Activated CD8-positive, alpha-beta T cell treated with anti-CD3 and anti-CD28 coated beads, Interleukin-2, amount 10 ng/mL, durations not matched to agents 7 days and 5 days (primary cell): ENCODE measurements at regions of chr7 and their contacts with region 1.

Region 1: GRCh38 chr7:149624419-149625339 is 127.1 kb upstream of the ZNF746 start:
- DNase-seq: peak; percentile 93
- ATAC-seq: peak; percentile 97
- H3K4me3 Mint-ChIP-seq: peak overlapping the region; percentile 88
- H3K27ac Mint-ChIP-seq: peak overlapping the region; percentile 90
- H3K4me1 Mint-ChIP-seq: peaks cover 43% of the 10 kb centered on the region
- H3K27me3 Mint-ChIP-seq: peaks cover 19% of the 10 kb centered on the region

Region 2: GRCh38 chr7:149460493-149461277 is 164.0 kb before region 1 on chr7 and contains the start of gene ZNF777:
- CTCF ChIA-PET with region 1: interaction called, 13 read pairs
- POLR2A ChIA-PET with region 1: interaction called, 6 read pairs
- DNase-seq: peak; percentile 89
- ATAC-seq: peak; percentile 98
- H3K4me3 Mint-ChIP-seq: peak within 1 kb of the TSS; percentile 82
- H3K27ac Mint-ChIP-seq: peak within 1 kb of the TSS; percentile 80
- H3K4me1 Mint-ChIP-seq: peaks cover 23% of the 10 kb centered on the region
- H3K27me3 Mint-ChIP-seq: peaks cover 18% of the 10 kb centered on the region
- total RNA-seq, gene ZNF777: 12.9 to 13.1 TPM

Region 3: GRCh38 chr7:149496642-149497391 is 127.9 kb before region 1 on chr7:
- CTCF ChIA-PET with region 1: interaction called, 25 read pairs
- POLR2A ChIA-PET with region 1: no interaction called
- DNase-seq: peak; percentile 66
- ATAC-seq: peak; percentile 35
- H3K4me3 Mint-ChIP-seq: peak overlapping the region; percentile 93
- H3K27ac Mint-ChIP-seq: peak overlapping the region; percentile 92
- H3K4me1 Mint-ChIP-seq: peaks cover 44% of the 10 kb centered on the region
- H3K27me3 Mint-ChIP-seq: peaks cover 2% of the 10 kb centered on the region

Region 4: GRCh38 chr7:149588930-149589329 is 35.7 kb before region 1 on chr7:
- CTCF ChIA-PET with region 1: no interaction called
- POLR2A ChIA-PET with region 1: no interaction called
- DNase-seq: no peak
- ATAC-seq: no peak
- H3K4me3 Mint-ChIP-seq: no peak overlapping the region
- H3K27ac Mint-ChIP-seq: peak overlapping the region; percentile 55
- H3K4me1 Mint-ChIP-seq: no peaks in the 10 kb centered on the region
- H3K27me3 Mint-ChIP-seq: no peaks in the 10 kb centered on the region

Region 5: DNA sequence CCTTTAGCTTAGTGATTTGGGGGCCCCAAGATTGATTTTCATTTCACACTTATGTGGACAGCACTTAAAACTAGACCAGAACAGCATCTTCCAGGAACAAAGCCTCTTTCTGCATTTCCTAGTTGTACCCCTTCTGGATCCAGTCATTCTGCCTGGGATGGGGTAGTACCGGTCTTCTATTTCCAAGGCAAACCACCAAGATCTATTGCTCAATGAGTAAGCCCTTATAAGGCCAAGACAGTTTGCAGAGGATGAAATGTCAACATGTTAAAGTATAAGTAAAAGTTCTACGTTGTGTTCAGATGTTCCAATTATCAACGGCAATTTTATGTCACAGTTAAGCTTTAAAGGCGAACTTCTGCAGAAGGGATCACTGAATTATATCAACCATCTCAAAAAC is 20.2 kb before region 1 on chr7:
- CTCF ChIA-PET with region 1: interaction called, 15 read pairs
- POLR2A ChIA-PET with region 1: interaction called, 3 read pairs
- DNase-seq: no peak
- ATAC-seq: no peak
- H3K4me3 Mint-ChIP-seq: no peak overlapping the region
- H3K27ac Mint-ChIP-seq: no peak overlapping the region
- H3K4me1 Mint-ChIP-seq: peaks cover 22% of the 10 kb centered on the region
- H3K27me3 Mint-ChIP-seq: no peaks in the 10 kb centered on the region

Region 6: GRCh38 chr7:149822353-149822943 is 197.8 kb after region 1 on chr7:
- CTCF ChIA-PET with region 1: no interaction called
- POLR2A ChIA-PET with region 1: no interaction called
- DNase-seq: no peak
- ATAC-seq: no peak
- H3K4me3 Mint-ChIP-seq: no peak overlapping the region
- H3K27ac Mint-ChIP-seq: no peak overlapping the region
- H3K4me1 Mint-ChIP-seq: peaks cover 5% of the 10 kb centered on the region
- H3K27me3 Mint-ChIP-seq: no peaks in the 10 kb centered on the region